Esophagus squamous epithelium (tissue), 5 donors: ENCODE measurements at regions of chr1 and their contacts with region 1.

Region 1: DNA sequence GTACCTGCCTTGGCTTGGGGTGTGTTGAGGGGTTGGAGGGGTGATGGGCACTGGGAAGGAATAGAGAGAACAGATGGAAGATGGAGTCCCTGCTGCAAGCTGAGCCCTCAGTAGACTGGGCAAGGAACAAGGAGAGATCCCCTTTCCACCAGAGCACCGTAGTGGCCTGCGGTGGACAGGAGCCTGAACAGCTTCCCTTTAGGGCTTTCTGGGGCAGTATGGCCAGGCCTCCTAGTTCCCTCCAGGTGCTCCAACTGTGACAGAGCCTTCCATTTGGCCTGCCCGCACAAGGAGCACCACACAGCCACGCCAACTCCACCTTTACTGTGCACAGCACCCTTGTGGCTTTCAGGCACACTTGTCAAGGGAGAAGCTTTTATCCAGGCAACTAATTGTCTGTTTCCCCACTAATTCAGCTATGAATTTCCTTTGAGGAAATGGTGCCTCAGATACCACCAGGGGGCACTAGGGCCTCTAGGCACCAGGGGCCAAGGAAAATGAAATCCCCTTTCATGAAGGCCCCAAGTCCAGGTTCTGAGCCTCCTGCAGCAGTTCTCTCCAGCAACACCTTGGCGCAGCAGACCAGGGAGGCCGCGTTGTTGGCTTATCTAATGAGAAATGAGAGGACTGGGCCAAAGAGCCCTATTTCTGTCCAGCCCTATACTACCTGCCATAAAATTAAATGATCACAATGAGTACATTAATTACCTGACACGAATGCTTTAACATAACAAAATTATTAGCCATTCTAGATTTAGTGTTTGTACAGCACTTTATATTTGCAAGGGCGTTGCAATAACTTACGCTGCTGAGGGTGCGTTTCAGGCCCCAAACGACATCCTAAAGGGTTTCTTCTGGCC is 23.1 kb upstream of the ERI3 start:
- DNase-seq: no peak
- H3K4me3 ChIP-seq: no peak overlapping the region
- H3K27ac ChIP-seq: no peak overlapping the region
- H3K4me1 ChIP-seq: no peaks in the 10 kb centered on the region
- H3K27me3 ChIP-seq: peaks cover 0 to 3% (median 0%) of the 10 kb centered on the region in 4 donors
- CTCF ChIP-seq: peak; percentile 10 to 68 (median 60)
- POLR2A ChIP-seq: no peak

Region 2: GRCh38 chr1:44237721-44238457 is 140.3 kb before region 1 on chr1:
- intact Hi-C with region 1: no loop called
- DNase-seq: no peak
- H3K4me3 ChIP-seq: no peak overlapping the region
- H3K27ac ChIP-seq: peak overlapping the region in 3 of 4 donors; percentile 75 to 87 (median 84)
- H3K4me1 ChIP-seq: peaks cover 0 to 40% (median 0%) of the 10 kb centered on the region in 3 donors
- H3K27me3 ChIP-seq: no peaks in the 10 kb centered on the region
- CTCF ChIP-seq: peak in 4 of 6 experiments; percentile 22 to 38 (median 24)
- POLR2A ChIP-seq: no peak

Region 3: GRCh38 chr1:44594871-44595746 is 217.0 kb after region 1 on chr1:
- intact Hi-C with region 1: loop called (anchors 5 kb)
- DNase-seq: no peak
- H3K4me3 ChIP-seq: no peak overlapping the region
- H3K27ac ChIP-seq: no peak overlapping the region
- H3K4me1 ChIP-seq: peaks cover 0 to 4% (median 0%) of the 10 kb centered on the region in 3 donors
- H3K27me3 ChIP-seq: peaks cover 0 to 42% (median 1%) of the 10 kb centered on the region in 4 donors
- CTCF ChIP-seq: peak; percentile 79 to 97 (median 89)
- POLR2A ChIP-seq: no peak